B cell (primary cell): ENCODE measurements at regions of chr7 and their contacts with region 1.

Region 1: DNA sequence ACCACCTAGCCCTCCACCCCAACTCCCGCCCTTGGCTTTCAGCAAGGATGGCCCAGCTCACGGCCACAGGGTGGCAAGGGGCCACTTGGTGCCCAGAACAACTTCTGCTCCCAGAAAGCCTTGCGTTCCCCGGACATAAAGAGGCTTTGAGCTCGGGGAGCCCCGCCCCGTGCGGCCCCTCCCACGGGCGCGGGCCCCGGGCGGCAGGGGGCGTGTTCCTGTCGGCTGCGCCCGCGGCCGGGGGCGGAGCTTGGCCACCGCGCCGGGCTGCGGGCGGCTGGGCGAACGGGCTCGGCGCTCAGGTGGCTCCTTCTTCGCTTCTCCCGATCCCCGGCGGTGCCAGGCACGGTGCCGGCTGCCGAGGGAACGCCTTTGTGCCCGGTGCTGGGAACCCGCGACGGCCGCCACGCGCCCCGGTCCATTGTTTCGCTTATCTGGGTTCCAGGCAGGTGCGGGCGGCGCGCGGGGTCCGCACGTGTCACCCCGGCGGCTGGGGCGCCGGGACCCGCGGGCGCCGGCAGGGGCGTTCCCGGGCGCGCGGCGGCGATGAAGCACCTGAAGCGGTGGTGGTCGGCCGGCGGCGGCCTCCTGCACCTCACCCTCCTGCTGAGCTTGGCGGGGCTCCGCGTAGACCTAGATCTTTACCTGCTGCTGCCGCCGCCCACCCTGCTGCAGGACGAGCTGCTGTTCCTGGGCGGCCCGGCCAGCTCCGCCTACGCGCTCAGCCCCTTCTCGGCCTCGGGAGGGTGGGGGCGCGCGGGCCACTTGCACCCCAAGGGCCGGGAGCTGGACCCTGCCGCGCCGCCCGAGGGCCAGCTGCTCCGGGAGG is at the start of gene NFE2L3:
- DNase-seq: peak; percentile 89
- ATAC-seq: peak; percentile 89
- H3K4me3 ChIP-seq: peak within 1 kb of the TSS; percentile 35 to 90 (median 62)
- H3K4me3 Mint-ChIP-seq: peak within 1 kb of the TSS; percentile 97
- H3K27ac ChIP-seq: peak within 1 kb of the TSS; percentile 16 to 65
- H3K27ac Mint-ChIP-seq: peak within 1 kb of the TSS; percentile 88
- H3K4me1 ChIP-seq: peaks cover 34 to 42% of the 10 kb centered on the region in 2 donors
- H3K4me1 Mint-ChIP-seq: peaks cover 48% of the 10 kb centered on the region
- H3K27me3 ChIP-seq: no peaks in the 10 kb centered on the region
- H3K27me3 Mint-ChIP-seq: no peaks in the 10 kb centered on the region
- CTCF ChIP-seq: no peak
- total RNA-seq, gene NFE2L3: 1.6 and 4.5 TPM in 2 replicates

Region 2: DNA sequence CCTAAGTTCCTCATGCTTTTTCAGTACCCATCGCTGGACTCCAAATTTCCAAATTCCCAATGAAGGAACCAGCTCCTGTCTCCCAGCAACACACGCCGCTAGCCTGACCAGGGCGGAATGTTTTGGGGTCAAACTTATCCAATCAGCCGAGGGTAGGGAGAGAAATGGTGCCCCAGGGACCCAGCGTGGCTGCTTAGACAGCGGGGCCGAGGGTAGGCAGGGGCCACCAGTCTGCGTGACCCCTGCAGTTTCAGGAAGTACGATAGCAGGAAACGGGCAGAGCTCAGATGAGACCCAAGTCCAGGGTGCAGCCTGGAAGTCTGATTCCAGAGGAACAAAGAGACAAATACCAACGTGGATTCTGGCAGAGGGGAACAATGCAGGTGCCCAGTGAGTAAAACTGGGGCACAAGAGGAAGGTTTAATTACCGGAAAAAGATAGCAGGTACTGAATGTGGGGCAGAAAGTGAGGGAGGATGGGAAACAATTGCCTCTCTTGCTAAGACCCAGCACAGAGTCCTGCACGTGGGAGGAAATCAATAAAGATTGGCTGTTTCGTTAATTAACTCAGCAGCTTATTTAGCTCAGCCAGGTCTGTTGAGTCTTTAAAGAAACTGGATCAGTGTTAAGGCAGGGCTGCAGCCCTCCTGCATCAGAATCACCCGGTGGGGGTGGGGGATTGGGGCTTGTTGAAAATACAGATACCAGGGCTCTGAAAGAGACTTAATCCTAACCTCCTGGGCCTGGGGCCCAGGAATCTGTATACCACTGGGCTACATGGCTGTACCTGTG is 50.6 kb before region 1 on chr7:
- CTCF ChIA-PET with region 1: interaction called, 3 read pairs
- POLR2A ChIA-PET with region 1: interaction called, 3 read pairs
- intact Hi-C with region 1: loop called (anchors 5 kb)
- DNase-seq: peak; percentile 62
- ATAC-seq: peak; percentile 64
- H3K4me3 ChIP-seq: peak overlapping the region; percentile 42 to 85 (median 75)
- H3K4me3 Mint-ChIP-seq: peak overlapping the region; percentile 99
- H3K27ac ChIP-seq: peak overlapping the region; percentile 43 to 77
- H3K27ac Mint-ChIP-seq: peak overlapping the region; percentile 96
- H3K4me1 ChIP-seq: peaks cover 30 to 48% of the 10 kb centered on the region in 2 donors
- H3K4me1 Mint-ChIP-seq: peaks cover 45% of the 10 kb centered on the region
- H3K27me3 ChIP-seq: no peaks in the 10 kb centered on the region
- H3K27me3 Mint-ChIP-seq: no peaks in the 10 kb centered on the region
- CTCF ChIP-seq: no peak